ENCODE measurements at regions of chr2 and their contacts with region 1.

Region 1: DNA sequence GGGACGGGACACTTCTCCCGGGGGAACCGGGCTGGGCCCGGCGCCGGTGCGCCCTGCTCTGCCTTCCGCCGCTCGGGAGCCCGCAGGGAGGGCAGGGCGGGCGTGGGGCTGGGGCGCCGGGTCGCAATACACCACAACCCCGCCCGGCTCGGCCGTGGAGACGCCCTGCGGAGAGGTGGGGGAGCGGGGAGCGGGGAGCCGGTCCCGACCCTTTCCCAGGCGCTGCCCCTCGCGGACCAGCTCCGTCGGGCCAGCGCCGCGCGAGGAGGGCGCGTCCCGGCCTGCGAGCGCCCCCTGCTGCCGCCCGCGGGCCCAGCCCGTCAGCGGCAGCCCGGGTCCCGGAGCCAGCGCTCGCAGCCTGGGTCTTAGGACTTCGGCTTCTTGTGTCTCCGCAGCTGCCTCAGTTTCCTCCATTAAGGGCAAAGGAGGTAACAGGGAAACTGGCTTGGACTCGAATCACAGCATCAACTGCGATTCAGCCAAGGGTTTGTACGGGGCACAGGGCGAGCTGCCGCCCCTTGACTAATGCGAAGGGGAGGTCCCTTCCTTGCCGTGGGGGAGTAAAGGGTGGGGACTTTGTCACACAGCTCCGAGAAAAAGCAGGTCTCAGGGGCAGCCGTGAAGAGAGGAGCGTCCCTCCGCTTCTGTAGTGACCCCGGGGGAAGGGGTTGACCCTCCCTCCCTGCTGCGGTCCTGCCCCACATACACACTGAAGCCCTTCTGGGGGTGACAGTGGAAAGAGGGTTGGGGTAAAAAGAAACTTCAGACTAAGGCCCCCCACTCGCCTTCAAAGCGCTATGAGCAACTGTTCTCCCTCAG is 717 bp upstream of the ADRA2B start:
- DNase-seq: peak; percentile 92
- CTCF ChIP-seq: peak; percentile 90

Region 2: DNA sequence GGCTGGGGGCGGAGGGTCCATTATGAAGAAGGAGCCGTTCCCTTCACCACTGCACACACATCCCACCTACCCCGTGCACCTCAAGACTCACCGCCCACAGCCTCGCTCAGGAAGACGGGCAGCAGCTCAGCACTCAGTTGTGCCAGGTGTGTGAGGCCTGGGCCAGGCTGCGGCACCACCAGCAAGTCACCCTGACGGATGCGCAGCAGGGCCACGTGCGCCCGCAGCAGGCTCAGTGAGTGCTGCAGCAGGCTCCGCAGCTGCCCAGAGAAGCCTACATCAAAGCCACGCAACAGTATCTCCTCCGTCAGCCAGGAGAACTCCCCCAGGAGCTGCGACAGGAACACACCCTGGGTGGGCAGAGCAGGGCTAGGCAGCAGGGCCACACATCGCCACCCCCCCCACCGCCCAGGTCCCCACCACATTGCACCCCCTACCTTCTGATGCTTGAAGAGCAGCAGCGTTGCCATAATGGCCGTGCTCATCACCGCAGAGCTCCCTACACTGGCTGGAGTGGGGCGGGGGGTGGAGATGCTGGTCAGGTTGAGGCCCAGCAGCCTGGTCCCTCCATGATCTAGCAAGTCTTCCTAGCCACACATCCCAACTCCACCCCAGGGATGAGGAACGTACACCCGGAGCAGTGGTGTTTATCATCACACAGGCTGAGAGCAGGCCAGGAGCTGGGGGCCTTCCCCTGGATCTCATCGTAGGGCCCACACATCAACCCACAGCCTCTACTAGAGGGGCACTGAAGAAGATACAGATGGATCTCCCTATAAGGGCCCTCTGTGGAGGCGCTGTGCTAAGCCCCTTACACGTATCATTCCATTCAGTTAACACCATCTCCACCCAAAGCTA is 92.5 kb before region 1 on chr2:
- CTCF ChIA-PET with region 1: interaction called, 36 read pairs
- POLR2A ChIA-PET with region 1: no interaction called
- DNase-seq: no peak
- CTCF ChIP-seq: no peak

Region 3: GRCh38 chr2:96131152-96131812 is 14.2 kb after region 1 on chr2:
- CTCF ChIA-PET with region 1: interaction called, 12 read pairs
- POLR2A ChIA-PET with region 1: no interaction called
- DNase-seq: no peak
- CTCF ChIP-seq: no peak